Heart left ventricle (tissue), 16 donors: ENCODE measurements at regions of chr1 and their contacts with region 1.

Region 1: DNA sequence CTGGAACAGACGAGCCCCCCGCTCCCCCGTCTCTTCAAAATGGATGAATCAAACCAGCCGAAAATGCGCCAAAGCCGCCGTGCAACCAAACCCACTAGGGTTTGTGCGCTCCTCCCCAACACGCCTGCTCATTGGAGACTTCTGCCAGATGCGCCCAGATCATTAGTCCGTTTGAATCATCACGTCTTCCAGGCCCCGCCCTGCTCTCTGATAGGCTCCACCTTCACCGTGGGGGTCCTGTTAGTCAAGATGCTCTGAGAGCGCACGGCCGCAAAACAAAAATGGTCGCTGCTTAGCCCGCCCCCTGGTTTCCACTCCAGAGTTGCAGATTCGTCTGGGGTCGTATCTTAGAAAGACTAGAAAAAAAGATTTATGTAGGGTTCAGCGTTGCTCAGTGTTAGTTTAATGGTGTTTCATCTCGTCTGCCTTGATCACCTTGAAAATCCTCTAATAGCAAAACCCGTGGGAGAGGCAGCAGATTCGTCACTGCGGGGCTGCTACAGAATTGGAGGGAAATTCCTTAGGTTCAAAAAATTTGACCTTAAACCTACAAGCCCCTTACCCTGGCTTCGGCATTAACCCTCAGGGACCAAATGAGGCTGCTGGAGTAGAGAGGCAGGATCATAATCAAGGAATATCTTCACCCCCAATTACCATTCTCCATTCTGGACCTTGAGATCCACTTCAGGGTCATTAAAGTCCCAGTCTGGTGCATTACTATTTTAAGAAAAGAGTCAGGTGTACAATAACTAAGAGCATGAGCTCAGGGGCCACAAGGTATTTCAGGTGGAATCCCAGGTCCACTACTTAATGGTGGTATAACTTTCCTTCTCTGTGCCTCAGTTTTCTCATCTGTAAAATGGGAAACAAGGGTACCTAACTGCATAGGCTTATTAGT is at the start of gene NUCKS1:
- DNase-seq: peak; percentile 98 to 100 (median 99)
- ATAC-seq: peak; percentile 87 to 93 (median 92)
- H3K4me3 ChIP-seq: peak within 1 kb of the TSS; percentile 49 to 91 (median 79)
- H3K27ac ChIP-seq: peak within 1 kb of the TSS; percentile 91 to 99 (median 96)
- H3K4me1 ChIP-seq: peaks cover 8 to 35% (median 27%) of the 10 kb centered on the region in 12 donors
- H3K27me3 ChIP-seq: no peaks in the 10 kb centered on the region
- CTCF ChIP-seq: peak in 8 of 12 donors; percentile 32 to 75 (median 41)
- POLR2A ChIP-seq: peak in 1 of 2 donors; percentile 58
- total RNA-seq, gene NUCKS1: 83.8 to 240 (median 198) TPM

Region 2: DNA sequence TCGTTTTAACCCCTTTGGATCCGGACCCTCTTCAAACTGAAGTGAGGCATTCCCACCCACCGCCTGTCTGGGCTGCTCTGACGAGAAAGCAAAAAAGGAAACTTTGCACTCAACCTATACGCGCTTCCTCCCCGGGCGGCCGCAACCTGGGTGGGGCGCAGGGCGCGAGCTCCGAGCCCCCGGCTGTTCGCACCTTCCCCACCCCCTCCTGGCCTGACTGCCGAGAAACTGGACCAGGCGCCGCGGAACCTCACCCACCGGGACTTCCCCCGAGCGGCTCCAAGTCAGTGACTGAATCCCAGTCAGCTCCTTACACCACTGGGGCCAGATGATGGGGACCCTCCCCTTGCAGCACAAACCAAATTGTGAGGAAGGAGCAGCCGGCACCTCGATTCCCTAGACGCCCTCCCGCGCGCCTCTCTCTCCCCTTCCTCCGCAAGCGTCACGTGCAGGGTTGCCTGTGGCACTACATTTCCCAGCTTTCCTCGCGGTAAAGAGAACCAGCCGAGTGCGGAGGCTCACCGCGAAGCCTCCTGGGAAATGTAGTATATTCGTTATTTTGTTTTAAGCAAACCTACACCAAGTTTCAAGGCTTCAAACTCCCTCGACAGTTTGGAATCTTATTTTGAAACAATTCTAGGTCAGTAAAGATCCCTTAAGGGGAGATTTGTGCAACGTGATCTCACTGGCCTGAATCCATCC is 24.8 kb after region 1 on chr1 and contains the start of gene RAB29:
- intact Hi-C with region 1: loop called in 2 of 10 experiments (anchors 1 to 2 kb)
- DNase-seq: peak; percentile 84 to 89 (median 87)
- ATAC-seq: peak; percentile 93 to 97 (median 96)
- H3K4me3 ChIP-seq: peak within 1 kb of the TSS; percentile 61 to 84 (median 77)
- H3K27ac ChIP-seq: peak within 1 kb of the TSS in 11 of 12 donors; percentile 35 to 89 (median 67)
- H3K4me1 ChIP-seq: peaks cover 0 to 36% (median 14%) of the 10 kb centered on the region in 12 donors
- H3K27me3 ChIP-seq: no peaks in the 10 kb centered on the region
- CTCF ChIP-seq: no peak
- POLR2A ChIP-seq: peak in 1 of 2 donors; percentile 65
- total RNA-seq, gene RAB29: 13.8 to 26.0 (median 16.6) TPM

Region 3: GRCh38 chr1:205805082-205805712 is 54.8 kb after region 1 on chr1:
- intact Hi-C with region 1: loop called in 3 of 10 experiments (anchors 2 to 5 kb)
- DNase-seq: no peak
- ATAC-seq: no peak
- H3K4me3 ChIP-seq: peak overlapping the region in 8 of 12 donors; percentile 3 to 94 (median 19)
- H3K27ac ChIP-seq: peak overlapping the region in 2 of 12 donors; percentile 29 to 44
- H3K4me1 ChIP-seq: peaks cover 0 to 92% (median 53%) of the 10 kb centered on the region in 12 donors
- H3K27me3 ChIP-seq: no peaks in the 10 kb centered on the region
- CTCF ChIP-seq: no peak
- POLR2A ChIP-seq: no peak